CD4-positive, alpha-beta memory T cell (primary cell): ENCODE measurements at regions of chr2 and their contacts with region 1.

Region 1: GRCh38 chr2:106085181-106085940 is 108.7 kb downstream of the UXS1 start:
- DNase-seq: peak; percentile 68 to 76 (median 73)
- H3K4me3 ChIP-seq: no peak overlapping the region
- H3K4me3 Mint-ChIP-seq: peak overlapping the region; percentile 28 to 90 (median 69)
- H3K27ac ChIP-seq: peak overlapping the region; percentile 42
- H3K27ac Mint-ChIP-seq: peak overlapping the region; percentile 87 to 98 (median 93)
- H3K4me1 ChIP-seq: peaks cover 63% of the 10 kb centered on the region
- H3K4me1 Mint-ChIP-seq: peaks cover 39 to 65% (median 55%) of the 10 kb centered on the region in 4 donors
- H3K27me3 ChIP-seq: no peaks in the 10 kb centered on the region
- H3K27me3 Mint-ChIP-seq: no peaks in the 10 kb centered on the region

Region 2: DNA sequence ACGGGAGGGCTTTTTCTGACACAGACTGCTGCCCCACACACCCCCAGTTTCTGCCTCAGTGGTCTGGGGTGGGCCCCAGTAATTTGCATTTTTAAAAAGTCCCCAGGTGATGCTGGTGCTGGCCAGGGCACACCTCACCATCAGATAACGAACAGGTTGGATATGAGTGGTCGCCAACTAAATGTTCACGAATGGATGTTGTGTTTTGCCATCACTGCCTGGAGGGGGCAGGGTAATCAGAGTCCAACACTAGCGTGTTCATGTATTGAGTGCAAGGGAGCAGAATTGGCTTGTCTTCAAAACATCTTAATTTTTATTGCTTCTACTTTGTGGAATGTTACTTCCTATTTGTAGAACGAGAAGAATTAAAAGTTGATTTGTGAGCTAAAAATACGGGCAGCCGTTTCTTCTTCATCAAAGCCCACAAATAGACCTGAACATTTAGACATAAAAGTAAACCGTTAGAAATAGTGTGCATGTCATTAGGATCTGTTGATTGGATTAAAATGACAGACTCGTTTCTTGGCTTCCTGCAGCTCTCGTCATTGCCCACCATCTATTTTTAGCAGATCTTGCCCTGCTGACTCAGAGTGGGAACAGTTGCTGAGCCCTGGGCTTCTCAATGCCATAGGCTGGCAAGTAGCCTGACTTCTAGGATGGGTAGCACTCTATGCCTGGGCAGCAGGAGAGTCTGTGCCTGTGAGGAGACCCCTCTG is 295.5 kb before region 1 on chr2:
- CTCF ChIA-PET with region 1: interaction called, 83 read pairs
- POLR2A ChIA-PET with region 1: interaction called, 8 read pairs
- intact Hi-C with region 1: loop called (anchors 1 kb)
- DNase-seq: peak; percentile 56 to 92 (median 61)
- H3K4me3 ChIP-seq: peak overlapping the region in 1 of 2 donors; percentile 25
- H3K4me3 Mint-ChIP-seq: peak overlapping the region; percentile 78 to 92 (median 84)
- H3K27ac ChIP-seq: peak overlapping the region; percentile 79
- H3K27ac Mint-ChIP-seq: peak overlapping the region; percentile 92 to 98 (median 96)
- H3K4me1 ChIP-seq: peaks cover 98% of the 10 kb centered on the region
- H3K4me1 Mint-ChIP-seq: peaks cover 80 to 98% (median 87%) of the 10 kb centered on the region in 4 donors
- H3K27me3 ChIP-seq: no peaks in the 10 kb centered on the region
- H3K27me3 Mint-ChIP-seq: no peaks in the 10 kb centered on the region

Region 3: GRCh38 chr2:105858868-105859693 is 226.3 kb before region 1 on chr2:
- CTCF ChIA-PET with region 1: interaction called, 4 read pairs
- POLR2A ChIA-PET with region 1: no interaction called
- intact Hi-C with region 1: loop called (anchors 2 kb)
- DNase-seq: peak in 1 of 5 donors; percentile 59
- H3K4me3 ChIP-seq: peak overlapping the region; percentile 6 to 20
- H3K4me3 Mint-ChIP-seq: peak overlapping the region in 7 of 8 donors; percentile 57 to 94 (median 81)
- H3K27ac ChIP-seq: peak overlapping the region; percentile 81
- H3K27ac Mint-ChIP-seq: peak overlapping the region; percentile 92 to 99 (median 95)
- H3K4me1 ChIP-seq: peaks cover 98% of the 10 kb centered on the region
- H3K4me1 Mint-ChIP-seq: peaks cover 76 to 94% (median 86%) of the 10 kb centered on the region in 4 donors
- H3K27me3 ChIP-seq: no peaks in the 10 kb centered on the region
- H3K27me3 Mint-ChIP-seq: no peaks in the 10 kb centered on the region

Region 4: DNA sequence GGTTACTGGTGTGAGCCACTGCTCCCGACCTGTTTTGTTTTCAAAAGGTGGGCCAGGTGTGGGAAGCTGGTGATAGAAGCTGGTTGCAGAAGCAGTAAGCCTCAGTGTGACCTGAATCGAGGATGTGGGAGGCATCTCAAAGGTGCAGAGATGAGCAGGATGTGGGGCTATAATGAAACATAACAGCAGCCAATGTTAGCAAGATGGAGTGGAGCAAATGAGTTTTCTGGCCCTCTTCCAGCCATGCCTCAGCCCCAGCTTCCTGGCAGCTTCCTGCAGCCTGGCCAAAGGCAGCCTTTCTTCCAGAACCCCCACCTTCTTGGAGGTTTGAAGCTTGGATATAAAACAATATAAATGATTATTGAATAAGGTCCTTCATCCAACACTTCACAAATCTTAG is 155.8 kb before region 1 on chr2:
- CTCF ChIA-PET with region 1: interaction called, 16 read pairs
- POLR2A ChIA-PET with region 1: interaction called, 32 read pairs
- intact Hi-C with region 1: no loop called
- DNase-seq: peak; percentile 62 to 72 (median 68)
- H3K4me3 ChIP-seq: no peak overlapping the region
- H3K4me3 Mint-ChIP-seq: peak overlapping the region; percentile 33 to 81 (median 63)
- H3K27ac ChIP-seq: no peak overlapping the region
- H3K27ac Mint-ChIP-seq: peak overlapping the region; percentile 73 to 97 (median 90)
- H3K4me1 ChIP-seq: peaks cover 89% of the 10 kb centered on the region
- H3K4me1 Mint-ChIP-seq: peaks cover 50 to 66% (median 65%) of the 10 kb centered on the region in 4 donors
- H3K27me3 ChIP-seq: no peaks in the 10 kb centered on the region
- H3K27me3 Mint-ChIP-seq: no peaks in the 10 kb centered on the region

Region 5: GRCh38 chr2:106053116-106053515 is 32.2 kb before region 1 on chr2:
- CTCF ChIA-PET with region 1: interaction called, 11 read pairs
- POLR2A ChIA-PET with region 1: interaction called, 7 read pairs
- intact Hi-C with region 1: loop called (anchors 1 kb)
- DNase-seq: peak in 4 of 5 donors; percentile 31 to 39 (median 36)
- H3K4me3 ChIP-seq: no peak overlapping the region
- H3K4me3 Mint-ChIP-seq: peak overlapping the region; percentile 33 to 85 (median 71)
- H3K27ac ChIP-seq: no peak overlapping the region
- H3K27ac Mint-ChIP-seq: peak overlapping the region in 4 of 7 donors; percentile 21 to 82 (median 71)
- H3K4me1 ChIP-seq: peaks cover 65% of the 10 kb centered on the region
- H3K4me1 Mint-ChIP-seq: peaks cover 48 to 72% (median 63%) of the 10 kb centered on the region in 4 donors
- H3K27me3 ChIP-seq: no peaks in the 10 kb centered on the region
- H3K27me3 Mint-ChIP-seq: no peaks in the 10 kb centered on the region